ENCODE measurements at regions of chr19 and their contacts with region 1.

Region 1: DNA sequence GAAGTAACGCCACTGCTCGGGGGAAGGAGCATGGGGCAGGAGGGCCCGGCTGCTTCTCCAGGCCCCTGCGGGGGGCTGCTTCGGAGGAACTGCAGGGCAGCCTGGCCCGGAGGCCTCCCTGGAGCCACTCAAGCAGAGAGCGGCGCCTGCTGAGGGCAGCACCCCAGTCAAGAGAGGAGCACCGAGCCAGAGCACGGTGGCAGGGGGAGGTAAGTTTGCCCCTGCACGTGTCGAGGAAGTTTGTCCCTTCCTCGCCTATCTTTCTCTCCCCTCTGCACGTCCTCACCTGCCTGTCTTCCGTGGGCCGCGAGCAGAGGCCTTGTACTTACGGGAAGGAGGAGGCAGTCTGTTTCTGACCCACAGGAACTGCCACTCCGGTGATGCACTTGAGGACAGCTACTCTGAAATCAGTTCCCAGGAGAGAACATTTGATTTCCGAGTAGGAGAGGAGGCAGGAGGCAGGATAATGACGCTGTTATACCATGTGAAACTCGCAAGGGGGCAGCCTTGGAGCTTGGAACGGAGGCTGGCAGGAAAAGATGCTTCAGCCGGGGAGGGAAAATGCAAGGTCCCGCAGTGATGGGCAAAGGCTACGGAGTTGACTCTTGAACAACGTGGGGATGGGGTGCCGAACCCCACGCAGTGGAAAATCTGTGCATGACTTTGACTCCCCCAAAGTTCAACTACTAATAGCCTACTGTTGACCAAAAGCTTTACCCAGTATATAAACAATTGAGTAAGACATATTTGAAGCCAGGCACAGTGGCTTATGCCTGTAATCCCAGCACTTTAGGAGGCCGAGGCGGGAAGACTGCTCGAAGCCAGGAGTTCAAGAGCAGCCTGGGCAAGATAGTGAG is 5.0 kb downstream of the FFAR1 start:
- DNase-seq: peak; percentile 73 to 86 (median 78)
- H3K4me3 ChIP-seq: no peak overlapping the region
- H3K27ac ChIP-seq: no peak overlapping the region
- H3K4me1 ChIP-seq: peaks cover 11 to 37% (median 24%) of the 10 kb centered on the region in 4 experiments
- H3K27me3 ChIP-seq: no peaks in the 10 kb centered on the region

Region 2: GRCh38 chr19:35363711-35364425 is 11.2 kb after region 1 on chr19:
- CTCF ChIA-PET with region 1: interaction called, 10 read pairs
- POLR2A ChIA-PET with region 1: no interaction called
- DNase-seq: no peak
- H3K4me3 ChIP-seq: no peak overlapping the region
- H3K27ac ChIP-seq: no peak overlapping the region
- H3K4me1 ChIP-seq: peaks cover 0 to 6% (median 3%) of the 10 kb centered on the region in 4 experiments
- H3K27me3 ChIP-seq: peaks cover 0 to 2% (median 0%) of the 10 kb centered on the region in 5 experiments

Region 3: DNA sequence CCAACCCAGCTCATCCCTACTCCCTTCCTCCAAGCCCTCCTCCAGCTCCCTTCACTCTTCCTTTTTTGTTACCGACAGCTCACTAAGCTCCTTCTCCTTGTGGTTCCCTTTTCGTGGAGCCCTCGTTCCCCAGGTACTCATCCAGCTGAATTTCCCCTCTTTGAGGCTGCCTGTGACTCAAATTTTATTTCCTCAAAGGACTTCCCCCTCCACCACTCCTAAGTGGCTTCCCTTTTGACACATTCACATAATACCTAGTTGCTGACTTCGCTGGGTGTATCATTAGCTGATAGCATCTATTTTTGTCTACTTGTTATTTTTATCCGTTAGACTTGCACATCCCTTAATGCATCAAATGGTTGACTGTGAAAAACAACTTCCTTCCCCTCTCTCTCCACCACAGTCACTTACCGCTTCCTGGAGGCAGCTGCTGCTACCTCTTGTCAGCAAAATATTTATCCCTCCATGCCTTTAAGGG is 109.8 kb after region 1 on chr19:
- CTCF ChIA-PET with region 1: interaction called, 118 read pairs
- POLR2A ChIA-PET with region 1: interaction called, 6 read pairs
- DNase-seq: peak; percentile 81 to 96 (median 91)
- H3K4me3 ChIP-seq: peak overlapping the region in 4 of 7 experiments; percentile 9 to 40 (median 34)
- H3K27ac ChIP-seq: peak overlapping the region in 1 of 2 experiments; percentile 57
- H3K4me1 ChIP-seq: peaks cover 15 to 65% (median 55%) of the 10 kb centered on the region in 4 experiments
- H3K27me3 ChIP-seq: no peaks in the 10 kb centered on the region

Region 4: GRCh38 chr19:35468637-35469036 is 116.0 kb after region 1 on chr19:
- CTCF ChIA-PET with region 1: interaction called, 118 read pairs
- POLR2A ChIA-PET with region 1: no interaction called
- DNase-seq: peak; percentile 74 to 84 (median 78)
- H3K4me3 ChIP-seq: no peak overlapping the region
- H3K27ac ChIP-seq: no peak overlapping the region
- H3K4me1 ChIP-seq: peaks cover 0 to 9% (median 2%) of the 10 kb centered on the region in 4 experiments
- H3K27me3 ChIP-seq: no peaks in the 10 kb centered on the region

Region 5: GRCh38 chr19:35478803-35479601 is 126.3 kb after region 1 on chr19:
- CTCF ChIA-PET with region 1: interaction called, 118 read pairs
- POLR2A ChIA-PET with region 1: no interaction called
- DNase-seq: no peak
- H3K4me3 ChIP-seq: no peak overlapping the region
- H3K27ac ChIP-seq: no peak overlapping the region
- H3K4me1 ChIP-seq: no peaks in the 10 kb centered on the region
- H3K27me3 ChIP-seq: peaks cover 0 to 4% (median 0%) of the 10 kb centered on the region in 5 experiments

Region 6: DNA sequence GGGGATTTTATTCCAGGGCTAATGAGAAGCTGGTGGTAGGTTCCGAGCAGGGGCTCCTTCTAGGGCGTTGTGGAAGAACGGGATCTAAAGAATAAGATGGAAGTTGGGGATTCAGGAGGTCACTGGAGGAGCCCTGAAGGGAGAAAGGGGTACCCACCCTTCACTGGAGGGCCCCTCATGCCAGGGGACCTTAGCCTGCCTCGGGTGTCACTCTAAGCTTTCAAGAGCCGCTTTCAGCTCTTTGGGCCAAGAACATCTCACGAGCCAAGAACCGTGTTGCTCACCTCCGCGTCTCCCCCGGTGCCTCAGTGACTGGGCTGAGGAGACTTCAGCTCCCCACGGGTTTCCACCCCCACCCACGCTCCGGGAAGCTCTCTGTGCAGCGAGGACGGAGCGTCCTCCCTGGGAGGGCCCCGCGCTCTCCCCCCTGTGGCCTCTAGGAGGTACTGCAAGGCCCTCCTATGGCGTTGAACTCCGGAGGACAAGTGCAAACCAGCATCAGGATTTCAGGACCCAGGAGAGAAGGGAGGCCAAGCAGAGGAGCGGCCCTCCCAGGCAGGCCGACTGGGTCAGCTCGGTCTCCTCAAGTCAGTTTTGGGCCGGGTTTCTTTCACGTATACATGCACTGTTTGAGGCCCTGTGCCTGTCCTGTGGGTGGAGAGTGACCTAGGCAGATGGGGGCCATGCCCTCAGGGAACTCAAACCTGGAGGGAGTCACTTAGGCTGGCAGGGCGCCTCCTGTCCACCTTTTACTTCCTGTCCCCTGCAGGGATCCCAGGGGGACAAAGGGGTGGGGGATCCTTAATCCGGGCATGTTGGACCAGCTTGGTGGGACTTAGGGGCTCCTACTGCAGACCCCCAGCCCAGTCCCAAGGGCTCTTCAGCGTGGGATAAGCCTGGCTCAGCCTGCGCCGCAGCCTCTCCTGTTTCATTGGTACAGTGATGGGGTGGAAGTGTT is 142.7 kb after region 1 on chr19:
- CTCF ChIA-PET with region 1: interaction called, 21 read pairs
- POLR2A ChIA-PET with region 1: no interaction called
- DNase-seq: peak; percentile 59 to 76 (median 76)
- H3K4me3 ChIP-seq: peak overlapping the region in 2 of 7 experiments; percentile 46 to 55
- H3K27ac ChIP-seq: no peak overlapping the region
- H3K4me1 ChIP-seq: peaks cover 0 to 4% (median 2%) of the 10 kb centered on the region in 4 experiments
- H3K27me3 ChIP-seq: peaks cover 0 to 5% (median 0%) of the 10 kb centered on the region in 5 experiments

Measured in common myeloid progenitor, CD34-positive (primary cell).